ENCODE measurements at regions of chr10 and their contacts with region 1.

Region 1: GRCh38 chr10:97081621-97082235 is 104.0 kb downstream of the SLIT1 start:
- DNase-seq: peak; percentile 85
- ATAC-seq: peak; percentile 63
- H3K4me3 Mint-ChIP-seq: no peak overlapping the region
- H3K27ac Mint-ChIP-seq: no peak overlapping the region
- H3K4me1 Mint-ChIP-seq: peaks cover 24% of the 10 kb centered on the region
- H3K27me3 Mint-ChIP-seq: no peaks in the 10 kb centered on the region
- CTCF ChIP-seq: peak; percentile 45; the same call in 1 of the 2 replicates

Region 2: DNA sequence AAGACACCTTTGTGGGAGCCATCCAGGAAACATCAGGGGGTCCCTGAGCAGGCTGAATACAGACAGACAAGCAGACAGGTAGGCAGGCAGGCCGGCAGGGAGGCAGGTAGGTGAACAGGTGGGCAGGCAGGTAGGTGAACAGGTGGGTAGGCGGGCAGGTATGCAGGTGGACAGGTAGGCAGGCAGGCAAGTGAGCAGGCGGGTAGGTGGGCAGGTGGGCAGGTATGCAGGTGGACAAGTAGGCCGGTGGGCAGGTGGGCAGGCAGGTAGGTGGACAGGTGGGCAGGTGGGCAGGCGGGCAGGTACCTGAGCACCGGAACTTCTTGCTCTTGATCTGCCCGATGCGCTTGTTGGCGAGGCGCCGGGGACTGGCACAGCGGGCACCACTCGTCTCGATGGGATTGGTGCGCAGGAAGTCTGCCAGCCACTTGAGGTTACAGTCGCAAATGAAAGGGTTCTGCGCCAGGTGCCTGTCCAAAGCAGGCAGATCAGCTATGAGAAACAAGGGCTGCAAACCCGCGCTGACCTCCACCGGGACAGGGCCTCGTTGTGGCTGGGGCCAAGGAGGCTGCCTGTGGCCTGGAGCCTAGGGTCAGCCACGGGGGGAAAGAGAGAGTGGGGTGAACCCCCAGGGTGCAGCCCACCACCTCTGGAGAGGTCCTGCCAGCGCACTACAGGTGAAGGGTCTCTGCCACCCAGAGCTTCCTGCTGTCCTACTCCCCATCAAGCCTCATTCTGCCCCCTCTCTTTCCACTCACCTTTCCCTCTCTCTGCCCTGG is 32.9 kb before region 1 on chr10:
- CTCF ChIA-PET with region 1: no interaction called
- POLR2A ChIA-PET with region 1: no interaction called
- DNase-seq: no peak
- ATAC-seq: no peak
- H3K4me3 Mint-ChIP-seq: no peak overlapping the region
- H3K27ac Mint-ChIP-seq: no peak overlapping the region; the same call in 1 of the 2 replicates
- H3K4me1 Mint-ChIP-seq: peaks cover 9% of the 10 kb centered on the region; the same call in 1 of the 2 replicates
- H3K27me3 Mint-ChIP-seq: no peaks in the 10 kb centered on the region; the same call in 1 of the 2 replicates
- CTCF ChIP-seq: no peak

Region 3: DNA sequence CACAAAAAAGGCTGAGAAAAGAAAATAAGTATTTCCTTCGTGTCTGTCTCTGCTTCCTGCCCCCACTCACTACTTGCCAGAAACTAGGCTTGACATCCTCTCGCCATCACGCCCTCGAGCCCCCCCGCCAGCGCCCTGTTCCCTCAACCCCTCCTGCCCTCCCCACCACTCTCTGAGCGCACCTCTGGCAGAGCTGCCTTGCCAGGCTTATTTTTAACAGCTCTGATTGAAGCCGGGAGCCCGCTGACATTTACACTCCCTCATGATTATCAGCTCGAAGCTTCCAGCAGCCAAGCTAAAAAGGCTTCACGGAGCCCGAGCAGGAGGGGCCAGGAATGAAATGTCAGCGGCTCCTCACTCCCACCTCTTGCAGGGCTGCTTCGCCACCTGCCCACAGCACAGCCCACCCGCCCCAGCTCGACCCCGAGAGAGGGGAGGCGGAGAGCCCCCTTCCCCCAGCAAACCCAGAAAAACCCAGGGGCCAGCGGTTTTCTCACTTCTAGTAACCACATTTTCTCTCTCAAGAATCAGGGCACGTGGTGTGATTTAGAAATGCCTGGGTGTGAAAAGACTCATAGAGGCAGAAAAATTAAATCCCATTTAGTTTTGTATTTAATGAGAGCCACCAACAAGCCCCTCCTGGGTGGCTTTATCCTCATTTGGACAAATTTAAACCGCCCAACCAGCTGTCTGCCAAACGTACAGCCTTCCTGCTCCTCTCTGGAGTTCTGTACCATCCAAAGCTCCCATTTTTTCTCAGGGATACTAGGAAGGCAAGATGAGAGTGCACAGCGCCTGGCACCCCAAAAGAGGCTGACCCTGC is 14.7 kb after region 1 on chr10:
- CTCF ChIA-PET with region 1: interaction called, 32 read pairs
- POLR2A ChIA-PET with region 1: no interaction called
- DNase-seq: no peak
- ATAC-seq: no peak; the same call in 1 of the 2 replicates
- H3K4me3 Mint-ChIP-seq: no peak overlapping the region
- H3K27ac Mint-ChIP-seq: peak overlapping the region; percentile 63; the same call in 1 of the 2 replicates
- H3K4me1 Mint-ChIP-seq: peaks cover 22% of the 10 kb centered on the region
- H3K27me3 Mint-ChIP-seq: no peaks in the 10 kb centered on the region; the same call in 1 of the 2 replicates
- CTCF ChIP-seq: no peak

Region 4: GRCh38 chr10:97107551-97107950 is 25.8 kb after region 1 on chr10:
- CTCF ChIA-PET with region 1: interaction called, 16 read pairs
- POLR2A ChIA-PET with region 1: interaction called, 4 read pairs
- DNase-seq: no peak
- ATAC-seq: no peak
- H3K4me3 Mint-ChIP-seq: no peak overlapping the region
- H3K27ac Mint-ChIP-seq: no peak overlapping the region
- H3K4me1 Mint-ChIP-seq: peaks cover 17% of the 10 kb centered on the region
- H3K27me3 Mint-ChIP-seq: no peaks in the 10 kb centered on the region
- CTCF ChIP-seq: no peak

Region 5: DNA sequence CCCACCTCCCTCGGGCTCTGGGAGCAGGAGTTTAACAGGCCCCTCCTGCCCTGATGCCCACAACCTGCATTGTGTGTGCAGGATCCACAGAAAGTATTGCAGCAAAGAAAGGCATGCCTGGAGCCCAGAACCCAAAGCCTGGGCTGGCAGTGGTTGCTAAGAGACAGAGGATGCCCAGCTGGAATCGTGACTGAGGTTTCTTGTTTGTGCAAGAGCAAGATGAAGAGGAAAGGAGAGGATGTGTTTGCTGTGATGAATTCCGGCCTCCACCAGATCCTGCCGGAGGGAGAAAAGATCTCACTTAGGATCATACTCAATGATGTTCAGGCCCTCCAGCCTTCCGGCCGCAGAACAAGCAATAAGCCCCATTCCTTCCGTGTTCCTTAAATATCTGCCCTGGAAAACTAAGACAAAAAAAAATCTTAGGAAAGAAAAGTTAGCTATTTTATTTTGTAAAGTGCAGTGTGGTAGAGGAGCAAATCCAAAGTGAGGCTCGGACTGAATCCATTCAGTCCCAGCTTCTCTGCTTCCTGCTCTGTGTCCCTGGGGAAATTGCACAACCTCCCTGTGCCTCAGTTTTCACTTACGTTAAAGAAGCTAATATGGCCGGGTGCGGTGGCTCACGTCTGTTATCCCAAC is 46.9 kb after region 1 on chr10:
- CTCF ChIA-PET with region 1: interaction called, 16 read pairs
- POLR2A ChIA-PET with region 1: no interaction called
- DNase-seq: no peak
- ATAC-seq: no peak
- H3K4me3 Mint-ChIP-seq: no peak overlapping the region
- H3K27ac Mint-ChIP-seq: no peak overlapping the region
- H3K4me1 Mint-ChIP-seq: no peaks in the 10 kb centered on the region
- H3K27me3 Mint-ChIP-seq: no peaks in the 10 kb centered on the region
- CTCF ChIP-seq: no peak

Region 6: DNA sequence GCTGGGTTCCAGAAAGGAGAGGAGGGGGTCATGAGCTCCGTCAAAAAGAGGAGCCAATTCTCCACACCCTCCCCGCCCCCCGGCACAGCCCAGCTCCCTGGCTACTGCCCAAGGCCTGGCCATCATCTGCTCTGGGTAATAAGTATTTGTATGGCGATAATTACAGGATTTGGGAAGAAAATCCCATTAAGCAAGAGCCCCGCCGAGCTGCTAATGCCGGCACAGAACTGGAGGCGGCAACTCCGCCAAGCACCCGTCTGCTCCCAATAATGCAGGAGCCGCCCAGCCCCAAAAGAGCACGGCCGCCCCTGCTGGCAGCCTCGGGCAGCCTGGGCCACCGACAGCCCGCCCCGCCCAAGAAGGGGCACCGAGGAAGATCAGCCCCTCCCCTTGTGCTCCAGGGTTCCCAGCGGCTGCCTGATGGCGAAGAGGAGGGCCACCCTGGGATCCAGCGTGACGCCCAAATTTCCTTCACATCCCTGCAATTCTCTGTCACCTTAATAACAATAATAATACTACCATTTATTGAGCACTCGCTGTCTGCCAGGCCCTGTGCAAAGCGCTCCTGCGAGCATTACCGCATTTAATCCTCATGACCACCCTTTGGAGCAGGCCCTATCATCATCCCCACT is 98.1 kb after region 1 on chr10:
- CTCF ChIA-PET with region 1: interaction called, 40 read pairs
- POLR2A ChIA-PET with region 1: no interaction called
- DNase-seq: peak; percentile 82
- ATAC-seq: peak; percentile 97
- H3K4me3 Mint-ChIP-seq: peak overlapping the region; percentile 57
- H3K27ac Mint-ChIP-seq: no peak overlapping the region
- H3K4me1 Mint-ChIP-seq: peaks cover 15% of the 10 kb centered on the region
- H3K27me3 Mint-ChIP-seq: peaks cover 36% of the 10 kb centered on the region
- CTCF ChIP-seq: no peak

Region 7: GRCh38 chr10:97196223-97197029 is 114.7 kb after region 1 on chr10:
- CTCF ChIA-PET with region 1: interaction called, 364 read pairs
- POLR2A ChIA-PET with region 1: no interaction called
- DNase-seq: peak; percentile 78
- ATAC-seq: peak; percentile 91
- H3K4me3 Mint-ChIP-seq: peak overlapping the region; percentile 77
- H3K27ac Mint-ChIP-seq: no peak overlapping the region
- H3K4me1 Mint-ChIP-seq: peaks cover 13% of the 10 kb centered on the region
- H3K27me3 Mint-ChIP-seq: peaks cover 15% of the 10 kb centered on the region
- CTCF ChIP-seq: peak; percentile 76

Measured in WTC11 (cell line).